ENCODE measurements at regions of chr15 and their contacts with region 1.

Region 1: DNA sequence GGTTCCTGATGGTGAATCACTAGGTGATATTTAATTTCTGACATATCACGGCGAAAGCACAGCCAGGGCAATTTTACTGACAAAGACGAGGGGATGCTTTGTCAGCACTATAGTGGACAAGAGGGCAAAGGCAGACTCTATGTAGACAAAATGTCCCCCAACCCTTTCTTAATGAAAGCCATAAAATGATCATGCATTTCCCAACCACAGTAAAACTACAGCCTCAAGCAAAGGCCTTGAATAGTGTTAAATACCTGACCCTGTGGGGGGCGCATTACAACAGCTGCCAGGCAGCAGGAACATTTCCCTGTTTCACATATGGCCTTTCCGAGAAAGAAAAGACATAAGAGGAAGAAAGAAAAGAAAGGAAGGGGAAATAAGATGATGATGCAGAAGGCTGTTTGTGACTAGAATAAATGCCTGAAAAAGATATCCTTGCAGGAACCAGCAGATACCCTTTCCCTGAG is 49.5 kb downstream of the GLDN start:
- DNase-seq: no peak
- ATAC-seq: no peak
- H3K4me3 ChIP-seq: no peak overlapping the region
- H3K27ac ChIP-seq: no peak overlapping the region
- H3K4me1 ChIP-seq: no peaks in the 10 kb centered on the region
- H3K27me3 ChIP-seq: peaks cover 27% of the 10 kb centered on the region
- CTCF ChIP-seq: no peak
- POLR2A ChIP-seq: no peak
- RAD21 ChIP-seq: no peak

Region 2: DNA sequence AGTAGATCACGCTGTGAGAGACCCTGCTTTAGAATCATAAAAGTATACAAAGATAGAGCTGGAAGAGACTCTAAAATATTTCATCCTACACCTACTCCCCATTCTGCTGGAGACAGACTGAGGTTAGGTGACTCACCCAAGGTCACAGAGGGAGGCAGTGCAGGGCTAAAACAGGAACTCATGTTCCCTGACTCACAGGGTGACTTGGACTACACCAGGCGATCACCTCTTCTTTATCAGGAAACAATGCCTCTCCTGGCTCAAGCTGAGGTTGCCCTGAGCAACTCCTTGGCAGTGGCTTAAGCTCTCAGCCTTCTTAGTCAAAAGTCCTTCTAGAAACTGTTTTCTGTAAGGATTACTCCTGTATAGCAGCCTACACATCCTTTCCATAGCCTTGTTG is 269.9 kb before region 1 on chr15:
- CTCF ChIA-PET with region 1: interaction called, 12 read pairs
- POLR2A ChIA-PET with region 1: no interaction called
- dilution Hi-C with region 1: no loop called
- in situ Hi-C with region 1: no loop called
- intact Hi-C with region 1: no loop called
- DNase-seq: peak; percentile 98
- ATAC-seq: peak; percentile 99
- H3K4me3 ChIP-seq: no peak overlapping the region
- H3K27ac ChIP-seq: no peak overlapping the region
- H3K4me1 ChIP-seq: peaks cover 3% of the 10 kb centered on the region; the same call in 1 of the 2 replicates
- H3K27me3 ChIP-seq: no peaks in the 10 kb centered on the region
- CTCF ChIP-seq: no peak
- POLR2A ChIP-seq: no peak
- RAD21 ChIP-seq: peak; percentile 36; the same call in 1 of the 2 replicates

Measured in IMR-90 (cell line).